Heart right ventricle (tissue), 16 donors: ENCODE measurements at regions of chr4 and their contacts with region 1.

Region 1: DNA sequence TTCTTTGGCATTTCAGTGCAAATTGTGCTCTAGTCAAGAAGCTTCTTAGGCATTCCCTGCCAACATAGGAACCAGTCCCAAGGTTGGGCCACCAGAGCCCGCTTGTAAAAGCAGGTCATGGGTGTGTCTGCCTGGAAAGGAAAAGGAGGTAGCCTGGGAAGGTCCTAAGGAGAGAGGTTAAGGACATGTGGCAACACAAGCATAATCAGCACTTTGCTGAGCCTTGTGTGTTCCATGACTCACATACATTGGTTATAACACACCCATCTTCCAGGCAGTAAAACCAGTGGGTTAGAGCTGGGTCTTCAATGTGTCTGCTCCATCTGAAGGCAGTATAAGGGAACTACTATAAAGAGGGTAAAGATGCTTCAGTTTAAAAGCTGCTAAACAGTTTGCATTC is 165.0 kb downstream of the FHIP1A start:
- DNase-seq: no peak
- ATAC-seq: no peak
- H3K4me3 ChIP-seq: no peak overlapping the region
- H3K27ac ChIP-seq: no peak overlapping the region
- H3K4me1 ChIP-seq: peaks cover 0 to 9% (median 0%) of the 10 kb centered on the region in 9 donors
- H3K27me3 ChIP-seq: no peaks in the 10 kb centered on the region
- CTCF ChIP-seq: no peak

Region 2: DNA sequence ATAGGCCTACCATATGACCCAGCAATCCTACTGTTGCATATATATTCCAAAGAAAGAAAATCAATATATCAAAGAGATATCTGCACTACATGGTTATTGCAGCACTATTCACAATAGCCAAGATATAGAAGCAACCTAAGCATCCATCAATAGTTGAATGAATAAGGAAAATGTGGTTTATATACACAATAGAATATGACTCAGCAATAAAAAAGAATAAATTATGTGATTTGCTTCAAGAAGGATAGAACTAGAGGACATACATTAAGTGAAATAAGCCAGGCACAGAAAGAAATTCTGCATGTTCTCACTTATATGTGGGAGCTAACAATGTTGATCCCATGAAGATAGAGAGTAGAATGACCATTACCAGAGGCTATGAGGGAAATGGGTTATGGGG is 178.1 kb before region 1 on chr4:
- intact Hi-C with region 1: loop called in 1 of 10 experiments (anchors 10 kb)
- DNase-seq: no peak
- ATAC-seq: no peak
- H3K4me3 ChIP-seq: no peak overlapping the region
- H3K27ac ChIP-seq: no peak overlapping the region
- H3K4me1 ChIP-seq: no peaks in the 10 kb centered on the region
- H3K27me3 ChIP-seq: no peaks in the 10 kb centered on the region
- CTCF ChIP-seq: no peak

Region 3: DNA sequence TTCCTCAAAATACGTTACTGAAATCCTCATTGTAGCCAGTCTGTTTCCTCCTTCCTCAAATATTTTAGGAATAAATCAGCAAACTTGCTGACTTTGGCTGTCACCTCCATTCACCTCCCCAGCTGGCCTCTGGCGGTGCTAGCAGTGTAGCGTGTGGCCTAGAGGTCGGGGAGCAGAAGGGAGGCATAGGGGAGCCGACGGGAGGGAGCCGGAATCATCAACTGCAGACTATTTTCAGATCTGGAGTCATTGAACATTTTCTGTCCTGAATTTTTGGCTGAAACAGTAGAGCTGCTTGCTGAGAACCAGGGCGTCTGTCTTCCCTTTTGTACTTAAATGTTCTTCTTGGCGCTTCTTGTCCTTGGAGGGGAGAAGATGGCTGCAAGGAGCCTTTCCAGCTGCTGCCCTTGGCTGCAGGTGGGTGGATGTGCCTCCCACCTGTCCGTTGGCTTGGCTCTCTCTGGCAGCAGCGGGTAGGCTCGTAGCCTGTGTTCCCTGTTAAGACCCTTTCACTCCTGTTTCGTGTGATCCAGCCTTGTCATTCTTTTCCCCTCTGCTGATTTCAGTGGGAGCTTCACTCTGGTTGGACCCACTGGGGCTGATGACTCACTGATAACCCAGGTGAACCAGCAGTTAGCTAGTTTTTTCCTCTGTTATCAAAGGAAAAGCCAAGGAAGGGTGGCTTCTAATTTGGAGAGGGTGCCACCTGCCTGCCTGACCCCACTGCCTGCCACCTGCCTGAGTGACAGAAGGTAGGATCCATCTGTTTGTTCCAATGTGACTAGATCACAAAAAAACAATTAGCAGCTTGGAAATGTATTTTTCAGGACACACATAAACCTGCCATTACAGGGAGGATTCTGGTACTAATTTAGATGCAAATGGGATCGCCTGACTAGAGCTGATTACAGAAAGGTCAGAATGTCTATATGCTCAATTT is 51.0 kb after region 1 on chr4:
- intact Hi-C with region 1: no loop called
- DNase-seq: no peak
- ATAC-seq: no peak
- H3K4me3 ChIP-seq: no peak overlapping the region
- H3K27ac ChIP-seq: no peak overlapping the region
- H3K4me1 ChIP-seq: peaks cover 0 to 5% (median 0%) of the 10 kb centered on the region in 9 donors
- H3K27me3 ChIP-seq: no peaks in the 10 kb centered on the region
- CTCF ChIP-seq: no peak

Region 4: GRCh38 chr4:151898061-151898460 is 324.1 kb after region 1 on chr4:
- intact Hi-C with region 1: no loop called
- DNase-seq: no peak
- ATAC-seq: no peak
- H3K4me3 ChIP-seq: no peak overlapping the region
- H3K27ac ChIP-seq: no peak overlapping the region
- H3K4me1 ChIP-seq: no peaks in the 10 kb centered on the region
- H3K27me3 ChIP-seq: no peaks in the 10 kb centered on the region
- CTCF ChIP-seq: no peak

Region 5: DNA sequence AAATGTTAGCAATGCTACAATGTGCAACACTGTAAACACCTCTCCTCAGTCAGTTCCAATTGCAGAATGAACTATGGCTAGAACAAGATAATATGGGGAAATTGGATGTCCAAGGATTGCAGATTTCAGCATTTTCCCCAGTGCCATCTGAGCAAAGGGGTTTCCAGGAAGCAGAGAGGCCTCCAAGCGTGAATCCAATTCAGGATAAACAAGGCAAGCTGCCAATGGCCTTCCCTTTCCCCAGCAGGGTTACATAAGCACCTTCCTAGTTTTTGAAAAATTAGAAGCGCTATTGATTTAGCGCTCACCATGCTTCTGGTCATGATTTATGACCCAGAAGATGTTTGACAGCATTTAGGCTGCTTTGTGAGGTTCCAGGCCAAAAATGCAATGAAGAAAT is 409.9 kb after region 1 on chr4:
- intact Hi-C with region 1: no loop called
- DNase-seq: no peak
- ATAC-seq: no peak
- H3K4me3 ChIP-seq: no peak overlapping the region
- H3K27ac ChIP-seq: no peak overlapping the region
- H3K4me1 ChIP-seq: peaks cover 0 to 5% (median 0%) of the 10 kb centered on the region in 9 donors
- H3K27me3 ChIP-seq: no peaks in the 10 kb centered on the region
- CTCF ChIP-seq: no peak